Activated CD4-positive, alpha-beta memory T cell treated with anti-CD3 and anti-CD28 coated beads, Interleukin-2, amount 10 ng/mL, durations not matched to agents 7 days and 5 days (primary cell): ENCODE measurements at regions of chr22 and their contacts with region 1.

Region 1: GRCh38 chr22:22587577-22588188 is 28.6 kb upstream of the PRAME start:
- DNase-seq: no peak
- H3K4me3 Mint-ChIP-seq: no peak overlapping the region
- H3K27ac Mint-ChIP-seq: no peak overlapping the region
- H3K4me1 Mint-ChIP-seq: no peaks in the 10 kb centered on the region
- H3K27me3 Mint-ChIP-seq: peaks cover 29% of the 10 kb centered on the region

Region 2: GRCh38 chr22:22450343-22450839 is 137.3 kb before region 1 on chr22:
- CTCF ChIA-PET with region 1: no interaction called
- POLR2A ChIA-PET with region 1: no interaction called
- DNase-seq: no peak
- H3K4me3 Mint-ChIP-seq: no peak overlapping the region
- H3K27ac Mint-ChIP-seq: no peak overlapping the region
- H3K4me1 Mint-ChIP-seq: no peaks in the 10 kb centered on the region
- H3K27me3 Mint-ChIP-seq: peaks cover 57% of the 10 kb centered on the region

Region 3: GRCh38 chr22:22576244-22576988 is 11.3 kb before region 1 on chr22:
- CTCF ChIA-PET with region 1: interaction called, 18 read pairs
- POLR2A ChIA-PET with region 1: no interaction called
- DNase-seq: peak; percentile 30
- H3K4me3 Mint-ChIP-seq: no peak overlapping the region
- H3K27ac Mint-ChIP-seq: no peak overlapping the region
- H3K4me1 Mint-ChIP-seq: no peaks in the 10 kb centered on the region
- H3K27me3 Mint-ChIP-seq: peaks cover 23% of the 10 kb centered on the region